CD4-positive, alpha-beta T cell (primary cell): ENCODE measurements at regions of chr7 and their contacts with region 1.

Region 1: GRCh38 chr7:11212080-11212711 is 238.5 kb downstream of the PHF14 start:
- DNase-seq: peak in 12 of 14 experiments; percentile 2 to 72 (median 22)
- ATAC-seq: peak; percentile 39
- H3K4me3 ChIP-seq: no peak overlapping the region
- H3K4me3 Mint-ChIP-seq: no peak overlapping the region
- H3K27ac ChIP-seq: no peak overlapping the region
- H3K27ac Mint-ChIP-seq: no peak overlapping the region
- H3K4me1 ChIP-seq: no peaks in the 10 kb centered on the region
- H3K4me1 Mint-ChIP-seq: no peaks in the 10 kb centered on the region
- H3K27me3 ChIP-seq: no peaks in the 10 kb centered on the region
- H3K27me3 Mint-ChIP-seq: peaks cover 10% of the 10 kb centered on the region
- CTCF ChIP-seq: peak; percentile 90

Region 2: GRCh38 chr7:10889266-10889898 is 322.8 kb before region 1 on chr7:
- CTCF ChIA-PET with region 1: interaction called, 3 read pairs
- POLR2A ChIA-PET with region 1: no interaction called
- intact Hi-C with region 1: loop called (anchors 10 kb)
- DNase-seq: peak in 13 of 14 experiments; percentile 2 to 66 (median 10)
- ATAC-seq: peak; percentile 70
- H3K4me3 ChIP-seq: no peak overlapping the region
- H3K4me3 Mint-ChIP-seq: peak overlapping the region; percentile 36
- H3K27ac ChIP-seq: no peak overlapping the region
- H3K27ac Mint-ChIP-seq: no peak overlapping the region
- H3K4me1 ChIP-seq: peaks cover 6% of the 10 kb centered on the region
- H3K4me1 Mint-ChIP-seq: peaks cover 13% of the 10 kb centered on the region
- H3K27me3 ChIP-seq: no peaks in the 10 kb centered on the region
- H3K27me3 Mint-ChIP-seq: no peaks in the 10 kb centered on the region
- CTCF ChIP-seq: peak; percentile 73

Region 3: GRCh38 chr7:11557627-11558026 is 345.4 kb after region 1 on chr7:
- CTCF ChIA-PET with region 1: no interaction called
- POLR2A ChIA-PET with region 1: no interaction called
- intact Hi-C with region 1: no loop called
- DNase-seq: peak in 2 of 14 experiments; percentile 6 to 16
- ATAC-seq: no peak
- H3K4me3 ChIP-seq: no peak overlapping the region
- H3K4me3 Mint-ChIP-seq: no peak overlapping the region
- H3K27ac ChIP-seq: no peak overlapping the region
- H3K27ac Mint-ChIP-seq: no peak overlapping the region
- H3K4me1 ChIP-seq: no peaks in the 10 kb centered on the region
- H3K4me1 Mint-ChIP-seq: no peaks in the 10 kb centered on the region
- H3K27me3 ChIP-seq: no peaks in the 10 kb centered on the region
- H3K27me3 Mint-ChIP-seq: no peaks in the 10 kb centered on the region
- CTCF ChIP-seq: no peak